Naive thymus-derived CD4-positive, alpha-beta T cell (primary cell): ENCODE measurements at regions of chr11 and their contacts with region 1.

Region 1: GRCh38 chr11:118689851-118690552 is 10.6 kb upstream of the TREH start:
- DNase-seq: peak; percentile 71 to 87 (median 82)
- ATAC-seq: peak; percentile 96
- H3K4me3 ChIP-seq: peak overlapping the region; percentile 73
- H3K4me3 Mint-ChIP-seq: peak overlapping the region; percentile 56 to 80 (median 74)
- H3K27ac ChIP-seq: peak overlapping the region; percentile 69
- H3K27ac Mint-ChIP-seq: peak overlapping the region in 8 of 9 donors; percentile 51 to 91 (median 72)
- H3K4me1 ChIP-seq: peaks cover 42 to 46% of the 10 kb centered on the region in 2 donors
- H3K4me1 Mint-ChIP-seq: peaks cover 34 to 58% (median 52%) of the 10 kb centered on the region in 7 donors
- H3K27me3 ChIP-seq: no peaks in the 10 kb centered on the region
- H3K27me3 Mint-ChIP-seq: peaks cover 0 to 23% (median 0%) of the 10 kb centered on the region in 5 donors

Region 2: GRCh38 chr11:118659314-118659952 is 30.6 kb before region 1 on chr11:
- CTCF ChIA-PET with region 1: interaction called, 3 read pairs
- POLR2A ChIA-PET with region 1: no interaction called
- intact Hi-C with region 1: loop called in 1 of 2 experiments (anchors 2 kb)
- DNase-seq: peak; percentile 75 to 88 (median 84)
- ATAC-seq: peak; percentile 99
- H3K4me3 ChIP-seq: no peak overlapping the region
- H3K4me3 Mint-ChIP-seq: peak overlapping the region in 2 of 10 donors; percentile 56 to 64
- H3K27ac ChIP-seq: no peak overlapping the region
- H3K27ac Mint-ChIP-seq: peak overlapping the region in 1 of 9 donors; percentile 1
- H3K4me1 ChIP-seq: peaks cover 0 to 7% of the 10 kb centered on the region in 2 donors
- H3K4me1 Mint-ChIP-seq: peaks cover 0 to 12% (median 6%) of the 10 kb centered on the region in 7 donors
- H3K27me3 ChIP-seq: no peaks in the 10 kb centered on the region
- H3K27me3 Mint-ChIP-seq: no peaks in the 10 kb centered on the region

Region 3: GRCh38 chr11:118715245-118715831 is 25.3 kb after region 1 on chr11:
- CTCF ChIA-PET with region 1: interaction called, 10 read pairs
- POLR2A ChIA-PET with region 1: interaction called, 100 read pairs
- intact Hi-C with region 1: no loop called
- DNase-seq: no peak
- ATAC-seq: no peak
- H3K4me3 ChIP-seq: no peak overlapping the region
- H3K4me3 Mint-ChIP-seq: no peak overlapping the region
- H3K27ac ChIP-seq: no peak overlapping the region
- H3K27ac Mint-ChIP-seq: peak overlapping the region in 1 of 9 donors; percentile 34
- H3K4me1 ChIP-seq: no peaks in the 10 kb centered on the region
- H3K4me1 Mint-ChIP-seq: peaks cover 4 to 13% (median 9%) of the 10 kb centered on the region in 7 donors
- H3K27me3 ChIP-seq: no peaks in the 10 kb centered on the region
- H3K27me3 Mint-ChIP-seq: peaks cover 0 to 10% (median 0%) of the 10 kb centered on the region in 5 donors

Region 4: DNA sequence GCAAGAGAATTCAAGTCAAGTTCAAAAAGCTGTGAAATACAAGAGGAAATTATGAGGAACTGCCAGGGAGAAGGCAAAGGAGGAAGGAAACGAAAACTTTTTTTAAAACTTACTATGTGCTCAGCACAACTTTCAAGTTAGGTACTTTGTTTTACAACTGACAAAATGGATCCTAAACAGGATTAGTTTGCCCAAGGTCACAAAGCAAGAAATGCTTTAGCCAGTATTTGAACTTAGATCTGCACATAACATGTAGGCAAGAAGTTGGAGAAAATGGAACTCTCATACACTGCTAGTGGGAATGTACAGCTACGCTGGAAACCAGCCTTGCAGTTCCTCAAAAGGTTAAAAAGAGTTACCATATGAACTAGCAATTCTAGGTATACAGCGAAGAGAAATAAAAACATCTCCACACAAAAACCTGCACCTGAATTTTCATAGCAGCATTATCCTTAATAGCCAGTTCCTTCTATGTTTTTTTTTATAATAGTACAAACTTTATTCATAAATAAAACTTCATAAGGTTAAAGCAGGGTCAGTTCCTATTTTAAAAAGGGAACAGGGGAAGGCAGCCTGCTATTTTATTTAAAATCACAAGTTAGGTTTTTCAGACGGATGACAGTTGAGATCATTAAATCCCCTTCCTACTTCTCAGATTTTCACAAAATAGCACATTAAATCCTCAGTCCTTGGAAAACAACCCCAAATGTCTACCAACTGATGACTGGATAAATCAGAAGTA is 81.7 kb after region 1 on chr11:
- CTCF ChIA-PET with region 1: interaction called, 16 read pairs
- POLR2A ChIA-PET with region 1: interaction called, 5 read pairs
- intact Hi-C with region 1: loop called in 1 of 2 experiments (anchors 5 kb)
- DNase-seq: no peak
- ATAC-seq: peak; percentile 31
- H3K4me3 ChIP-seq: no peak overlapping the region
- H3K4me3 Mint-ChIP-seq: peak overlapping the region; percentile 7 to 83 (median 73)
- H3K27ac ChIP-seq: peak overlapping the region; percentile 57
- H3K27ac Mint-ChIP-seq: peak overlapping the region in 8 of 9 donors; percentile 42 to 92 (median 80)
- H3K4me1 ChIP-seq: peaks cover 54 to 76% of the 10 kb centered on the region in 2 donors
- H3K4me1 Mint-ChIP-seq: peaks cover 55 to 97% (median 88%) of the 10 kb centered on the region in 7 donors
- H3K27me3 ChIP-seq: no peaks in the 10 kb centered on the region
- H3K27me3 Mint-ChIP-seq: no peaks in the 10 kb centered on the region

Region 5: DNA sequence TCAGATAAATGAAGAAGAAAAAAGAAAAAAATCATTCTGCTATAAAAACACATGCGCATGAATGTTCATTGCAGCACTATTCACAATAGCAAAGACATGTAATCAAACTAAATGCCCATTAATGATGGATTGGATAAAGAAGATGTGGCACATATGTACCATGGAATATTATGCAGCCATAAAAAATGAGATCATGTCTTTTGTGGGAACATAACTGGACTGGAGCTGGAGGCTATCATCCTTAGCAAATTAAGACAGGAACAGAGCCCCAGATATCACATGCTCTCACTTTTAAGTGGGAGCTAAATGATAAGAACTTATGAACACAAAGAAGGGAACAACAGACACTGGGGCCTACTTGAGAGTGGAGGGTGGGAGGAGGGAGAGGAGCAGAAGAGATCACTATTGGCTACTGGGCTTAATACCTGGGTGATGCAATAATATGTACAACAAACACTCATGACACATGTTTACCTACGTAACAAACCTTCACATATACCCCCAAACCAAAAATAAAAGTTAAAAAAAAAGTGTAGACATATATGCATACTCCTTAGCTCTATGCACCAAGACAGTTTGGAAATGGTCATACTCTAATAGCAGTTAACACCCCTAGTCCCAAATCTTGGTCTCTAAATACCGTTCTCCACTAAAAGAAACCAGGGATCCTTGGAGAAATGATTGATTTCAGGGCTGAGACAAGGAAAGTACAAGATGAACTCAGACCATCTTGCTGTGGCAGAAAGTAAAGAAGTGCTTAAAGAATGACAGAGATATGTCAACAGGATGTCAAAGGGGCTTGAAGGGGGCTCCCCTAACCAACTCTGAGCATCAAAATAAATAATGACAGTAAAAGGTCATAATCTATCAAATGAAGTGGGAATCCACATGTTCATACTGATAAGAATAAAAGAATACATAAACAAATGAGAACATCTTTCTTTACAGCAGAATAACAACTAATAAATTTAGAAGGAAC is 118.1 kb after region 1 on chr11:
- CTCF ChIA-PET with region 1: interaction called, 10 read pairs
- POLR2A ChIA-PET with region 1: no interaction called
- intact Hi-C with region 1: no loop called
- DNase-seq: no peak
- ATAC-seq: no peak
- H3K4me3 ChIP-seq: no peak overlapping the region
- H3K4me3 Mint-ChIP-seq: no peak overlapping the region
- H3K27ac ChIP-seq: peak overlapping the region; percentile 11
- H3K27ac Mint-ChIP-seq: peak overlapping the region in 4 of 9 donors; percentile 58 to 79 (median 68)
- H3K4me1 ChIP-seq: no peaks in the 10 kb centered on the region
- H3K4me1 Mint-ChIP-seq: peaks cover 0 to 25% (median 14%) of the 10 kb centered on the region in 7 donors
- H3K27me3 ChIP-seq: no peaks in the 10 kb centered on the region
- H3K27me3 Mint-ChIP-seq: peaks cover 0 to 5% (median 0%) of the 10 kb centered on the region in 5 donors

Region 6: DNA sequence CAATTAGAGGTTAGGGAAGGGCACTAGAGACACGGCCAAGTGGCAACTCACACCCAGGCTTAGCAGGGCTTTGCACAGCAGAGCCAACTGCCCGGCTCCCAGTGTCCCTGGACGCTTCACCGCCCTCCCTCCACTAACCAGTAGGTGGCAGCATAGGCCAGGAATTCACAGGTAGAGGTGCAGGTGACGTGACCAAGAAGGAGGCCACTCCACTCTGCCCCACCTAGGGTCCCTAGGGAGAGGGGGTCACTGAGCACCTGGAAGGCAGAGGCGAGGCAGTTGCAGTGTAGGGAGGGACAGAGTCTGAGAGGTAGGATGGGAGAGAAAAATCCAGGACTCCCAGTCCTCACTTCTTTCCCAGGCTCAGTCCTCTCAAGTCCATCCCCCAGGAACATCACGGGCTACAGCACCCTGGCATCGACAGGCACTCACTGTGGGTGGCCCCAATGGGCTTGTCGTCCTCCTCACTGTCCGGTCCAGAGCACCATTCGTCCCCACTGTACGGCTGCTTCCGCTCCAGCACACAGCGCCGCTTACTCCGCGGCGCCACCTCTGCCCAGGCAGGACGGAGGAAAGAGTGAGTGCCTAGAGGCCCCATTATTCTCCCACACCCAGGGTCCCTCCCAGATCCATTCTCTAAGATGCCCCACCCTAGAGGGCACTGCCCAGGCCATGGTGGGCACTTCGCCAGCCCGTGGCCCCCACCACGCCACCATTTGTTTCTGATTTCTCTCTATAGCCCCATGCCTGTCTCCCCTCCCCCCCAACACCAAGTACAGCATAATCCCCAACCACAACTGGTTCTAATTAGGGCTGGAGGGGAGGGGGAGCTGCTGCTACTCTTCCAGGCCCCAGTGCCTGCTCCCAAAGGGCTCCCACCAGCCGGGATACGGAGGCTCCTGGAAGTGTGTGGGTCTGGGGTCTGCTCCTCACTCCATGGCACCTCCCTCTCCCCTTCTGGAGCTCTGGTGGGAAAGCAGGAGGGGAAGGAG is 217.3 kb after region 1 on chr11:
- CTCF ChIA-PET with region 1: interaction called, 3 read pairs
- POLR2A ChIA-PET with region 1: interaction called, 5 read pairs
- intact Hi-C with region 1: loop called in 1 of 2 experiments (anchors 1 kb)
- DNase-seq: peak; percentile 73 to 91 (median 82)
- ATAC-seq: peak; percentile 83
- H3K4me3 ChIP-seq: no peak overlapping the region
- H3K4me3 Mint-ChIP-seq: peak overlapping the region in 9 of 10 donors; percentile 15 to 99 (median 56)
- H3K27ac ChIP-seq: peak overlapping the region; percentile 96
- H3K27ac Mint-ChIP-seq: peak overlapping the region; percentile 80 to 96 (median 93)
- H3K4me1 ChIP-seq: peaks cover 28 to 50% of the 10 kb centered on the region in 2 donors
- H3K4me1 Mint-ChIP-seq: peaks cover 30 to 53% (median 46%) of the 10 kb centered on the region in 7 donors
- H3K27me3 ChIP-seq: no peaks in the 10 kb centered on the region
- H3K27me3 Mint-ChIP-seq: no peaks in the 10 kb centered on the region

Region 7: GRCh38 chr11:118997627-118998387 is 307.8 kb after region 1 on chr11 and contains the start of gene CENATAC:
- CTCF ChIA-PET with region 1: no interaction called
- POLR2A ChIA-PET with region 1: no interaction called
- intact Hi-C with region 1: loop called in 1 of 2 experiments (anchors 5 kb)
- DNase-seq: peak; percentile 91 to 98 (median 94)
- ATAC-seq: peak; percentile 98
- H3K4me3 ChIP-seq: peak within 1 kb of the TSS; percentile 91
- H3K4me3 Mint-ChIP-seq: peak within 1 kb of the TSS; percentile 87 to 99 (median 94)
- H3K27ac ChIP-seq: peak within 1 kb of the TSS; percentile 85
- H3K27ac Mint-ChIP-seq: peak within 1 kb of the TSS; percentile 87 to 98 (median 92)
- H3K4me1 ChIP-seq: peaks cover 6 to 16% of the 10 kb centered on the region in 2 donors
- H3K4me1 Mint-ChIP-seq: peaks cover 26 to 45% (median 37%) of the 10 kb centered on the region in 7 donors
- H3K27me3 ChIP-seq: no peaks in the 10 kb centered on the region
- H3K27me3 Mint-ChIP-seq: no peaks in the 10 kb centered on the region
- total RNA-seq, gene CENATAC: 53.5 to 136 (median 109) TPM